Dorsolateral prefrontal cortex (tissue), 120 donors: ENCODE measurements at regions of chr15 and their contacts with region 1.

Region 1: GRCh38 chr15:57146506-57147201 is 228.2 kb downstream of the TCF12 start:
- DNase-seq: no peak
- H3K4me3 ChIP-seq: peak overlapping the region in 56 of 59 donors; percentile 1 to 57 (median 36)
- H3K27ac ChIP-seq: peak overlapping the region in 51 of 59 donors; percentile 4 to 88 (median 54)
- H3K27me3 ChIP-seq: no peaks in the 10 kb centered on the region
- CTCF ChIP-seq: peak; percentile 70 to 96 (median 85)

Region 2: GRCh38 chr15:57017024-57017423 is 129.6 kb before region 1 on chr15:
- intact Hi-C with region 1: loop called in 1 of 2 experiments (anchors 5 kb)
- DNase-seq: no peak
- H3K4me3 ChIP-seq: no peak overlapping the region
- H3K27ac ChIP-seq: peak overlapping the region in 49 of 59 donors; percentile 4 to 83 (median 56)
- H3K27me3 ChIP-seq: no peaks in the 10 kb centered on the region
- CTCF ChIP-seq: peak in 47 of 56 donors; percentile 10 to 72 (median 45)

Region 3: GRCh38 chr15:57213862-57214261 is 67.2 kb after region 1 on chr15:
- intact Hi-C with region 1: loop called (anchors 2 to 5 kb)
- DNase-seq: no peak
- H3K4me3 ChIP-seq: peak overlapping the region in 12 of 59 donors; percentile 4 to 34 (median 18)
- H3K27ac ChIP-seq: peak overlapping the region in 38 of 59 donors; percentile 5 to 70 (median 38)
- H3K27me3 ChIP-seq: no peaks in the 10 kb centered on the region
- CTCF ChIP-seq: peak; percentile 22 to 80 (median 63)

Region 4: DNA sequence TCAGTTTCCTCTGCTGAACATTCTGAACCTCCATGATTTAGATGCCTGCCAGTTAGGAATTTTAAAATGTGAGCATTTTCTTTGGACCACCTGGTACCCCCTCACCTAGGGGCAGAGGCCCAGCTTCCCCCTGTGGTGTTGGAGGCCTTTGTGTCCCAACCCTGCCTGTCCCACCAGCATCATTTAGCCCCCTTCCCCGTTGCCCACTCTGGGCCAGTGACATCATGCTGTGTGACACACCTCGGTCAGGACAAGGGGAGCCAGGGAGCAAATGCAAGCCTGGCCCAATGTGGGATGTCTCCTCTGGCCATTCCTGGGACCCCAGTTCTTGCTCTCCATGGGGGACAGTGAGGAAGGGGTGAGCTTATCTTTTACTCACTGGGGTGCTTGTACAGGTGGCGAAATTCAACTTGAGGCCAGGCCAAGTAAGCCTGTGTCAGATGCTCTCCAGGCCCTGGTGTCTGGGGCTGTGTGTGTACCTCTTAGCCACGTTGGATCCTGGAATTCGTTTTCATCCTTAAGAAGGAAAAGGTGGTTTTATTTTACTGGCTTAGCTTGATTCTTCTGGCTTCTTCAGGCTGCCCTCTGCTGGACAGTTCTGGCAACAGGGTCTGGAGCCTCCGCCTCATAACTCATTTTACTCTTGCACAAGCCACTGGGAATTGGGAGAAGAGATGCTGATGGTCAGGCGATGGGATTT is 395.3 kb after region 1 on chr15:
- intact Hi-C with region 1: loop called in 1 of 2 experiments (anchors 10 kb)
- DNase-seq: peak; percentile 49 to 85 (median 74)
- H3K4me3 ChIP-seq: no peak overlapping the region
- H3K27ac ChIP-seq: peak overlapping the region in 1 of 59 donors; percentile 43
- H3K27me3 ChIP-seq: no peaks in the 10 kb centered on the region
- CTCF ChIP-seq: peak; percentile 56 to 88 (median 77)